Common myeloid progenitor, CD34-positive (primary cell): ENCODE measurements at regions of chr5 and their contacts with region 1.

Region 1: GRCh38 chr5:158064334-158065123 is 205.6 kb upstream of the CLINT1 start:
- DNase-seq: no peak
- H3K4me3 ChIP-seq: no peak overlapping the region
- H3K27ac ChIP-seq: no peak overlapping the region
- H3K4me1 ChIP-seq: peaks cover 0 to 2% (median under 1%) of the 10 kb centered on the region in 4 experiments
- H3K27me3 ChIP-seq: no peaks in the 10 kb centered on the region

Region 2: GRCh38 chr5:158074992-158075769 is 10.7 kb after region 1 on chr5:
- CTCF ChIA-PET with region 1: interaction called, 14 read pairs
- POLR2A ChIA-PET with region 1: no interaction called
- DNase-seq: peak; percentile 71 to 87 (median 86)
- H3K4me3 ChIP-seq: peak overlapping the region in 4 of 7 experiments; percentile 27 to 63 (median 46)
- H3K27ac ChIP-seq: peak overlapping the region in 1 of 2 experiments; percentile 37
- H3K4me1 ChIP-seq: peaks cover 0 to 3% (median under 1%) of the 10 kb centered on the region in 4 experiments
- H3K27me3 ChIP-seq: peaks cover 0 to 2% (median 0%) of the 10 kb centered on the region in 5 experiments

Region 3: GRCh38 chr5:158100373-158100888 is 35.9 kb after region 1 on chr5:
- CTCF ChIA-PET with region 1: no interaction called
- POLR2A ChIA-PET with region 1: no interaction called
- DNase-seq: peak in 2 of 3 donors; percentile 30 to 43
- H3K4me3 ChIP-seq: no peak overlapping the region
- H3K27ac ChIP-seq: no peak overlapping the region
- H3K4me1 ChIP-seq: no peaks in the 10 kb centered on the region
- H3K27me3 ChIP-seq: no peaks in the 10 kb centered on the region